ENCODE measurements at regions of chr10 and their contacts with region 1.

Region 1: GRCh38 chr10:21278491-21279239 is 246.8 kb downstream of the SKIDA1 start:
- DNase-seq: peak; percentile 96
- ATAC-seq: peak; percentile 95

Region 2: GRCh38 chr10:21336476-21337170 is 58.0 kb after region 1 on chr10:
- intact Hi-C with region 1: loop called (anchors 5 kb)
- DNase-seq: no peak
- ATAC-seq: peak; percentile 75

Region 3: DNA sequence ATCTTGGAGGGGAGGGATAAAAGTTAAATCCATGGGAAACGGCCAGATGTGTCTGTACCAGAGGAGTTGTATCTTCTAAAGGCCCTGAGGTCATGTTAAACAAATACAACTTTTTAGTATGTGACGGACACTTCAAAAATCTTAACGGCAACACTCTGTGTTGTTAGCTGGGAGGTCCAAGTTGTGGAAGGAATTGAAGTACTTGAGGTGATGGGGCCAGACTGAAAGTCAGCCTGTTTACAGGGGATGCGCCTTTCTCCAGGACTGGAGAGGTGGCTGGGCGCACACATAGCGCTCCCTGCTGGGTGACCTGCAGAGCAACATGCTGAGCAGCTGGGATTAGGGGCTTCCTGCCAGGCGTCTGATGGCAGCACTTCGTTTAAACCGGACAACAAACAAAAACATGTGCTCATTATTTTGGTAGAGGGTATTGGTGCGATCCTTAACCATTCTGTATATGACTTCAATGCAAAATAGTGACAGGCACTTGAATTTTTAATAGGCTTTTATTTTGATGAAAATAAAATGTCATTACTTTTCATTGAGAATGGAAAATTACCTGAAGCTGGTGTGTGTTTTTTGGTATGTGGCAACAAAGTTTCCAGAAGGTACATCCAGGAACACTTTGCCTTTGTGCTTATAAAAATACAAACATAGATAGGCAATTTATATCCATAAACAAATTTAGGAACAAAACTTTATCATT is 453.6 kb after region 1 on chr10:
- intact Hi-C with region 1: loop called (anchors 2 kb)
- DNase-seq: peak; percentile 78
- ATAC-seq: peak; percentile 89

Region 4: GRCh38 chr10:21953585-21954057 is 675.0 kb after region 1 on chr10:
- intact Hi-C with region 1: loop called (anchors 5 kb)
- DNase-seq: no peak
- ATAC-seq: no peak

Measured in Right ventricle myocardium inferior (tissue), 1 donor.